ENCODE measurements at regions of chr9 and their contacts with region 1.

Region 1: DNA sequence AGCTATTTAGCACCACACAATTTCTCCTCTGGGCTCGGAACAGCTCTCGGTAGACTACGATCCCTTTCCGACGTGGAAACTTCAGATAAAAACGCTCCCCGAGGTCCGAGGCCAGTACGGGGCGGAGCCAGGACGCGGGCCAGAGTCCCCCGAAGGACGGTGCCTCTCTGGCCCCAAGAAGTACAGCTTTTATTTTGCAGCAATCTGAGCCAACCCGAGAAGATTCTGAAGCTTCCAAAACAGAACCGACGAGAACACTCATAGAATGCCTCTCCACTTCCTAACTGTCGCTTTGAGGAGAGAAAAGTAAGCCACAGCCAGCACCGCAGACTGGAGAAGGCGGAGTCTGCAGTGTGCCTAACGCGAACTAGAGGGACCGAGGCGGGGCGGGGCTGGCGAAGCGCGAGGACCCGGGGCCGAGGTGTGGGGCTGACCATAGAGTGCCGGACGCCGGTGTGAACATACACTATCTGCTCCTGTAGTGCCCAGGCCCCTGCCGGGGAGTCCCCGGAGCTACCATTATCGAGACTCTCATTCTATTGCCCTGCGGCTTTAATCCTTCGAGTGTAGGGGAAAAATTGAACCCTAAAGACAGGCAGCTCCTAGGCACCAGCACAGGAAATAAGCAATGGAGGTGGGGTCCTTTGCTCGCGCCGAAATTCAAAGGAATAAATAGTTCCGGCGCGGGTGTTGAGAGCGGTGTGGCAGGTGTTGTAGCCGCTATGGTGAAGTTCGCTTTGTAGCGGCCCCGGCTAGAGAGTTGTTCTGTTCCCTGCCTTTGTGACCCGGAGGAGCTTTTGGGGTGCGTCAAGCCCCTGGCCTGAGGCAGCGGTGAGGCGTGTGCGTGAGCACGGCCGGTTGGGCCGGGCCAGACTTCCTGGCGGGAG is at the start of gene SMC2:
- DNase-seq: peak; percentile 68
- H3K4me3 ChIP-seq: peak within 1 kb of the TSS; percentile 71
- H3K27ac ChIP-seq: peak within 1 kb of the TSS; percentile 93
- H3K27me3 ChIP-seq: no peaks in the 10 kb centered on the region
- CTCF ChIP-seq: no peak
- polyA plus RNA-seq, gene SMC2: 5.5 and 9.3 TPM in 2 replicates

Region 2: GRCh38 chr9:103669296-103669695 is 424.6 kb before region 1 on chr9:
- CTCF ChIA-PET with region 1: no interaction called
- POLR2A ChIA-PET with region 1: no interaction called
- DNase-seq: no peak
- H3K4me3 ChIP-seq: no peak overlapping the region
- H3K27ac ChIP-seq: no peak overlapping the region
- H3K27me3 ChIP-seq: no peaks in the 10 kb centered on the region
- CTCF ChIP-seq: no peak

Region 3: GRCh38 chr9:103942651-103943050 is 151.2 kb before region 1 on chr9:
- CTCF ChIA-PET with region 1: no interaction called
- POLR2A ChIA-PET with region 1: no interaction called
- DNase-seq: no peak
- H3K4me3 ChIP-seq: no peak overlapping the region
- H3K27ac ChIP-seq: no peak overlapping the region
- H3K27me3 ChIP-seq: no peaks in the 10 kb centered on the region
- CTCF ChIP-seq: no peak

Region 4: DNA sequence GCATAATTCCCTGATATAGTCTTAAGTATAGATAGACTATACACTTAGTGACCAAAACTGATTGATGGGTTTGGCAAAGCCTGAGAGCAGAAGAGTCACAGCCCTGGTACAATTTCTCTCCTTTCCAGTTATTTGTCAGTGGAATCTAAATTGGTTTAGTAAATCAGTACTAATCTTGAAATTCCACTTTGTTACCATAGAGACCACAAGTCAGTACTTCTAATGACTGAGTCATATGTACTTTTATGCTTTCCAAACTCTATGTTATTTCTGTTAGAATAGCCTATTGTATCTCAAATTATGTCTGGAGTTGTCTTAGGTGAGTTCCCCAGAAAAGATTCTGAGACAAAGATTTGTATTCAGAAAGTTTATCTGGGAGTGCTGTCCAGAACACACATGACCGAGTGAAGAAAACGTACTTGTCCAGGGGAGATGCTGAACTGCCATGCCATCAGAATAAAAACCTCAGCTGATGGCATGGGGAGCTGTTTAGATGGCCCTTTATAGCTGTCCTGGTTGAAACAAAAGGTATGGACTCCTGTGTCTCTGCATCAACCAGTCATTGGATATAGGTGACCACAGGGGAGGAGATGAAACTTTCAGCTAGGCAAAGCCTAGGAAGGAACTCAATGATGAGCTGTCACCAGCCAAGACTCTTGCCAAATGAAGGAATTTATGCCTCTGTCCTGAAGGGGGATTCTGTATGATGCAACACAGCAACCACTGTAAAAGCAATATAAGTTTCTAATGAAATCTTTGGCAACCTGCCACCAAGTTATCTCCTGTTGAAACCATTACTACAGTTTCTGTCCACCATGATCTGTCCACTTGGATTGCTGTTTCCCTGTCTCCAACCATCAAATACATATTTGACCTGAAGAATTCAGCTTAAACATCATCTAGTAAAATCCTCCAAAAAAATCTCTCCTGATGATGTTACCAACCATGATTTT is 17.8 kb before region 1 on chr9:
- CTCF ChIA-PET with region 1: interaction called, 32 read pairs
- POLR2A ChIA-PET with region 1: interaction called, 7 read pairs
- DNase-seq: no peak
- H3K4me3 ChIP-seq: no peak overlapping the region
- H3K27ac ChIP-seq: no peak overlapping the region
- H3K27me3 ChIP-seq: no peaks in the 10 kb centered on the region
- CTCF ChIP-seq: peak; percentile 17; the same call in 1 of the 2 replicates

Region 5: GRCh38 chr9:104107799-104108198 is 13.9 kb after region 1 on chr9:
- CTCF ChIA-PET with region 1: no interaction called
- POLR2A ChIA-PET with region 1: no interaction called
- DNase-seq: no peak
- H3K4me3 ChIP-seq: no peak overlapping the region
- H3K27ac ChIP-seq: no peak overlapping the region
- H3K27me3 ChIP-seq: no peaks in the 10 kb centered on the region
- CTCF ChIP-seq: no peak

Region 6: DNA sequence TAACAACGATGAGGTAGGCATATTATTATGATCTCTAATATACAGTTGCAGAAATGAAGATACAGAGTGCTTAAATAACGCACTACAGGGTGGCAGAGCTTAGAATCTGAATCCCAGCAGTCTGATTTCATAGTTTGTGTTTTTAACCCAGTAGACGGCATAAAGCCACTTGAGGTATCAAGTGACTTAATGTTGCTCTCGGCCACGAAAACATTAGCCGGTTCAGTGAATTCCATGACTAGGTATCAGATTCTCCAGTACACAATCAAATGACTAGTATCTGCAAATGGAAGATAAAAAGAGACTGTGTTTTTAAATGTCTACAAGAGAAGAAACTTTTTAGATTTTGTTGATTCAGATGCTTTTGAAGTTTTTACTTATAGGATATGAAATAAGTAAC is 25.0 kb after region 1 on chr9:
- CTCF ChIA-PET with region 1: interaction called, 10 read pairs
- POLR2A ChIA-PET with region 1: no interaction called
- DNase-seq: no peak
- H3K4me3 ChIP-seq: no peak overlapping the region
- H3K27ac ChIP-seq: no peak overlapping the region
- H3K27me3 ChIP-seq: no peaks in the 10 kb centered on the region
- CTCF ChIP-seq: no peak

Region 7: DNA sequence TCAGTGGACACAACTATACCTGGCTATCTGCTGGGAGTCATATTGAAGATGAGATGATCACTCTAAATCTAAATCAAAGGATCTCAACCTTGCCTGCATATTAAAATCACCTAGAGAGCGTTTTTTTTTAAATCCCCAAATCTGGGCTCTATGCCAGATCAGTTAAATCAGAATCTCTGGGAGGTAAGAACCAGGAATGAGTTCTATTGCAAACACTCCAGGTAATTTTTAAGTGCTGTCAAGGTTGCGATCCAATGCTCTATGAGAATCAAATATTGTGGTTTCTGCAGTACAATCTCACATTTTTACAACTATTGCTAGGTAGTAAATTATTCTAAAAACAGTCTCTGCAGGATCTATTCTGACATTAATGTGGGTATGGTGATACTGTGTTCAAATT is 207.9 kb after region 1 on chr9:
- CTCF ChIA-PET with region 1: no interaction called
- POLR2A ChIA-PET with region 1: no interaction called
- DNase-seq: no peak
- H3K4me3 ChIP-seq: no peak overlapping the region
- H3K27ac ChIP-seq: no peak overlapping the region
- H3K27me3 ChIP-seq: no peaks in the 10 kb centered on the region
- CTCF ChIP-seq: no peak

Measured in AG04450 (cell line).